Breast epithelium (tissue), 4 donors: ENCODE measurements at regions of chr1 and their contacts with region 1.

Region 1: DNA sequence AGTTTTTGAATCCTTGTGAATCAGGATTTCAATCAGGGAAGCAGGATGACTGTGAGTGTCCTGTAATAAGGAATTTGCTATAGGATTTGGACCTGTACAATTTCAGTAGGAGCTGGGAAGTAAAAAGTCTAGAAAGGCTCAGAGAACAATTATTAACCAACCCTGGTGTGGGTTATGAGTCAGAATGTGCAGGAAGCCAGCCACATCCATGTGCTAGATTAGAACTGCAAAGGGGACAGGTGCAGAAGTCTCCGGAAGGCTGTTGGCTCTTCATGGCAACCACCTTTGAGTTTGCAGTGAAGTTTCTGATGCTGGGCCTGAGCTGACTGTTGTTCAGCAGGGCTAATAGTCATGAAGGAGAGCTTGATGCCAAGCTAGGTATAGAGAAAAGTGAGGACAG is 70.7 kb downstream of the SPATA46 start:
- DNase-seq: no peak
- H3K4me3 ChIP-seq: no peak overlapping the region
- H3K27ac ChIP-seq: no peak overlapping the region
- H3K4me1 ChIP-seq: no peaks in the 10 kb centered on the region
- H3K27me3 ChIP-seq: no peaks in the 10 kb centered on the region
- CTCF ChIP-seq: no peak
- POLR2A ChIP-seq: no peak

Region 2: DNA sequence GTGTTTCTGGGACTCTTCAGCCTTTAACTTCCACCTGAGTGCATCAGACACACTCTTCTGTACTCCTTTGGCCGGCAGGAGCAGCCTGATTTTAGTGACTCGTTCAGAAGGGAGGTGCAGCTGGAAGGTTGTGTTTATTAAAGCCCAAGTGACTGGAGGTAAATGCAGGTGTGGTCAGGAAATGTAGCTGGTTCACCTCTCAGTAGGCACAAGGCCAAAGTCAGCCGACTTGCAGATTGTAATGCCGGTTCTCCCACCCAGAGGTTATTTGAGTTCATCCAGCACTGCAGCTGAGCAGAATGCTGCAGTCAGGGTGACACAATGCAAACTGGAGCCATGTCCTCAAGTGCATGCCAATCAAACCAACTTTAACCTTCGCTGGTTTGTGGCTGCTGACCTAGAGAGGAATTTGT is 20.8 kb before region 1 on chr1:
- intact Hi-C with region 1: no loop called
- DNase-seq: peak; percentile 65 to 82
- H3K4me3 ChIP-seq: no peak overlapping the region
- H3K27ac ChIP-seq: peak overlapping the region in 1 of 2 donors; percentile 59
- H3K4me1 ChIP-seq: peaks cover 0 to 26% of the 10 kb centered on the region in 2 donors
- H3K27me3 ChIP-seq: no peaks in the 10 kb centered on the region
- CTCF ChIP-seq: no peak
- POLR2A ChIP-seq: no peak

Region 3: DNA sequence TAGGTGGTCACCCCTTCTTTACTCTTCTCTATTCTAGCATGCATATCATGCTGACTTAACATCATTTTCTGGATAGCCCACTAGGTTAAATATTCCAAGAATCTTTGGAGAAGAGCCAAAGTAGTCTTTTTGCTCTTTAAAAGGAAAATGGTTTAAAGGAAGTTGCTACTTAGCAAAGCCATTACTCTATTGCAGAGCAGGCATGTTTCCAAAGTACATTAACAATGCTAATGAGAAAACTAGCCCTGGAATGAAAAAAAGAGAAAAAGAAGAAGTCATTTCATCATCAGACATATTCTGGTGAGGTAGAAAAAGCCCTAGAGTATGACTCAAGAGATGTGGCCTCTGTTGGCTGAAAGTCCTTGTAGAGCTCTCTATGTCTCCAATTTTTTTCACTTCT is 1089.8 kb after region 1 on chr1:
- intact Hi-C with region 1: loop called (anchors 5 kb)
- DNase-seq: no peak
- H3K4me3 ChIP-seq: no peak overlapping the region
- H3K27ac ChIP-seq: no peak overlapping the region
- H3K4me1 ChIP-seq: no peaks in the 10 kb centered on the region
- H3K27me3 ChIP-seq: no peaks in the 10 kb centered on the region
- CTCF ChIP-seq: no peak
- POLR2A ChIP-seq: no peak